Psoas muscle (tissue), 8 donors: ENCODE measurements at regions of chr13 and their contacts with region 1.

Region 1: GRCh38 chr13:38905831-38906230 is 84.8 kb downstream of the STOML3 start:
- DNase-seq: no peak
- ATAC-seq: no peak
- H3K4me3 ChIP-seq: no peak overlapping the region
- H3K27ac ChIP-seq: no peak overlapping the region
- H3K4me1 ChIP-seq: no peaks in the 10 kb centered on the region
- H3K27me3 ChIP-seq: no peaks in the 10 kb centered on the region
- CTCF ChIP-seq: no peak

Region 2: DNA sequence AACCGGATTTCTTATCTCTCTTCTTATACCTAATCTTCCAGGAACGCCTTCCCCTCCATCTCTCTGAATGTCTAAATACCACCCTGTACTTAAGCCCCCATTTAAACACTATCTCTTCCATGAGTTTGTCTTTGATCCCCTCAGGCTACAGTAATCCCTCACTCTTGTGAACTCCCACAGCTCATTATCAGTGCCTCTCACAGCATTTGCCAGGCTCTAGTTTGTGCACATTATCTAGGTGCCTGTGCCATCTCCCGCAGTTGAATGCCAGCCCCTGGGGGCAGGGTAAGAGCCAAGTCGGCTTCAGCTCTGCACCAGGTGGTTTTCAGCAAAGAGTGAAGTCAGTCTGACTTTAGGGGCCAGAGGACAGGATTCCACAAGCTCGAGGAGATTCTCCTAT is 147.6 kb before region 1 on chr13:
- intact Hi-C with region 1: no loop called
- DNase-seq: no peak
- ATAC-seq: peak in 3 of 4 donors; percentile 36 to 47 (median 44)
- H3K4me3 ChIP-seq: no peak overlapping the region
- H3K27ac ChIP-seq: no peak overlapping the region
- H3K4me1 ChIP-seq: peaks cover 17% of the 10 kb centered on the region
- H3K27me3 ChIP-seq: no peaks in the 10 kb centered on the region
- CTCF ChIP-seq: no peak

Region 3: GRCh38 chr13:38866649-38867048 is 39.2 kb before region 1 on chr13:
- intact Hi-C with region 1: loop called (anchors 5 kb)
- DNase-seq: no peak
- ATAC-seq: no peak
- H3K4me3 ChIP-seq: no peak overlapping the region
- H3K27ac ChIP-seq: no peak overlapping the region
- H3K4me1 ChIP-seq: no peaks in the 10 kb centered on the region
- H3K27me3 ChIP-seq: no peaks in the 10 kb centered on the region
- CTCF ChIP-seq: no peak